OCI-LY7 (cell line): ENCODE measurements at regions of chr7 and their contacts with region 1.

Region 1: DNA sequence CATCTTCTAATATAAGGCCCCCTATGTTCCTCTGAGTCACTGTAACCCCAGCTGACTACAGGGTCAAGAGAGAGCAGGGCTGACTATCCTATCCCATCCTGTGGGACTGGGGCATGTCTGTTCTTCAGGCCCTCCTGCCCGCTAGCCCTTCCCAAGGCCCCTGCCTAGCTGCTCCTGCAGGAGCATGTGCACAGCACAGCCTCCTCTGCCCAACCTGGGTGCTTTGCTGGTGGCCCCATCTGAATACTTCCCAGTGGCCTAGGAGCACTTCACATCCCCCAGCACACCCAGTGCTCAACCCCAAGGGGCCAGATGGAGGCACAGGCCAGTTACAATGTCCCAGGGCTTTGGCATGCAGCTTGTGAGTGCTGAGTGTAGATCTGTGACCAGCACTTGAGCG is 37.3 kb downstream of the AGBL3 start:
- DNase-seq: no peak
- H3K4me3 ChIP-seq: no peak overlapping the region
- H3K27ac ChIP-seq: no peak overlapping the region
- H3K4me1 ChIP-seq: no peaks in the 10 kb centered on the region
- CTCF ChIP-seq: no peak

Region 2: DNA sequence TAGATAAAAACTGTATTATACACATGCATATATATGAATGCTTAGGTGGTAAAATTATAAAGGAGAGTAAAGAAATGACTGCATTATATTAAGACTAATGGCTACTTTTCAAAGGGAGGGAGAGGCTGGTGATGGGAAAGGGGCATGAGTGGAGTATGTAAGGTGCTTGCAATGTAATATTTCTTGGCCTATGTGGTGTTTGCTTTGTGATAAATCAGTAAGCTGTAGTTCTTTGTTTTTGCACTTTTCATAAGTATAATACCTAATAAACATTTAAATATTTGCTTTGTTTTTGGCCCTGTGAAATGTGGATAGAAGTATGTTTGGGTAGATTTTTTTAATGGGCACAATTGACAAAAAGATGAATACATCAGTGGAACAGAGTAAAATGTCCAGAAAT is 11.4 kb before region 1 on chr7:
- CTCF ChIA-PET with region 1: no interaction called
- POLR2A ChIA-PET with region 1: no interaction called
- intact Hi-C with region 1: no loop called
- DNase-seq: no peak
- H3K4me3 ChIP-seq: no peak overlapping the region
- H3K27ac ChIP-seq: no peak overlapping the region
- H3K4me1 ChIP-seq: no peaks in the 10 kb centered on the region
- CTCF ChIP-seq: no peak

Region 3: GRCh38 chr7:135831455-135832195 is 808.0 kb after region 1 on chr7:
- CTCF ChIA-PET with region 1: no interaction called
- POLR2A ChIA-PET with region 1: no interaction called
- intact Hi-C with region 1: loop called (anchors 5 kb)
- DNase-seq: no peak
- H3K4me3 ChIP-seq: no peak overlapping the region
- H3K27ac ChIP-seq: no peak overlapping the region
- H3K4me1 ChIP-seq: no peaks in the 10 kb centered on the region
- CTCF ChIP-seq: no peak